ENCODE measurements at regions of chr12 and their contacts with region 1.

Region 1: DNA sequence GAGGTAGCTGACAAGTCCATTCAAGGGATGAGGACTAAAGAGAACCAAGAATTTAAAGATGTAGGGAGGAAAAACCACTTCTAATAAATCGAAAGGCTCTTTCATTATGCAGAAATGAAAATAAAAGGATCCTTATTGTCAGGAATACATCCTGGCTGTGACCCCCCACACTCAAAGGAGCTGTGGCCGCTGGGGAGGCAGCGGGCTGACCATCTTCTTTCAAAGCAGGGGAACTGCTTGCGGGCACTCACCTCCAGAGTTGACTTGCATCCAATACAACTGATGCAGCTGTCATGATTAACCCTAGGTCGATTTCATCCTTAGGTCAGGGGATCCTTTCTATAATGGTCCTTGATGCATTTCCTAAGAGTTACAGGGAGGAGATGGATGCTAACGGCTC is 35.3 kb downstream of the TRAFD1 start:
- DNase-seq: no peak
- ATAC-seq: no peak
- H3K4me3 Mint-ChIP-seq: peak overlapping the region in 1 of 10 donors; percentile 29
- H3K27ac Mint-ChIP-seq: peak overlapping the region in 8 of 10 donors; percentile 8 to 83 (median 58)
- H3K4me1 Mint-ChIP-seq: peaks cover 14 to 34% (median 30%) of the 10 kb centered on the region in 4 donors
- H3K27me3 Mint-ChIP-seq: no peaks in the 10 kb centered on the region

Region 2: DNA sequence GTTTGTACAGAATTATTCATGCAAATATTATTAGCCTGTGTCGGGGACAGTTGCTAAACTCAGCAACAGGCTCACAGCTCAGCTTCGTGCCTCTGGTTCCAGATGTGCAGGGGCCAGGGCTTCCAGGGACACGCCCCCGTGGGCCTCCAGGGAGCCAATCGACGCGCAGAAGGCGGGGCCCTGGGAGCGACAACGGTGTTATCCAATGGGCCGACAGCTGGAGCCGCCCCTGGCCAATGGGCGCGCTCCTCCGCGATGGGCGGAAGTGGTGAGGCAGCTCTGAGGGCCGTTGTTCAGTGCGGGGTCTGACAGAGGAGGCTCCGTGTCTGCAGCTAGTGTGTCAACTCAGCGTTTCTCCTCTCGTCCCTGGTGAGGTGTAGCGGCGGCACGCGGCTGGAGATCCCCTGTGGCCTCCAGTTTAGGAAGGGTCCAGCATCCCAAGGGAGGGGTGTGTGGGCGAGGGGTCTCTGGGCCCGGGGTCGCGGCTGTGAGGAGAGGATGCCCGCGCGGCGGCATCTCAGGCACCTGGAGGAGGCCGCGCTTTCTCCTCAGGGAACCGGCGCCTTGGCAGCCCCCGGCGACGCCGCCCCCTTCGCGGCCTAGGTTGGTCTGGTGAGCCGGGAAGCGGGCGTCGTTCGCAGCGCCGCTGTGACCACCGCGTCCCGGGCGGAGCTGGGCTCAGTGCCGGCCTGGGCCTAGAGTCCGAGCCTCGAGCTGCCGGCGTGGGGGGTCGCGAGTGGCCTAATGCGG is 35.2 kb before region 1 on chr12 and contains the start of gene TRAFD1:
- POLR2A ChIA-PET with region 1: interaction called, 17 read pairs
- DNase-seq: peak; percentile 96 to 99 (median 98)
- ATAC-seq: peak; percentile 99
- H3K4me3 Mint-ChIP-seq: peak within 1 kb of the TSS; percentile 70 to 93 (median 86)
- H3K27ac Mint-ChIP-seq: peak within 1 kb of the TSS; percentile 82 to 92 (median 88)
- H3K4me1 Mint-ChIP-seq: peaks cover 9 to 45% (median 35%) of the 10 kb centered on the region in 4 donors
- H3K27me3 Mint-ChIP-seq: no peaks in the 10 kb centered on the region
- polyA plus RNA-seq, gene TRAFD1: 32.5 to 57.6 (median 55.9) TPM

Region 3: GRCh38 chr12:112183141-112184021 is 22.8 kb after region 1 on chr12:
- POLR2A ChIA-PET with region 1: no interaction called
- DNase-seq: no peak
- ATAC-seq: no peak
- H3K4me3 Mint-ChIP-seq: no peak overlapping the region
- H3K27ac Mint-ChIP-seq: peak overlapping the region in 5 of 10 donors; percentile 4 to 73 (median 15)
- H3K4me1 Mint-ChIP-seq: no peaks in the 10 kb centered on the region
- H3K27me3 Mint-ChIP-seq: no peaks in the 10 kb centered on the region

Measured in naive thymus-derived CD8-positive, alpha-beta T cell (primary cell).